Motor neuron (in vitro differentiated cells): ENCODE measurements at regions of chr6 and their contacts with region 1.

Region 1: GRCh38 chr6:110944681-110945151 is 13.8 kb upstream of the GTF3C6 start:
- ATAC-seq: peak in 7 of 8 experiments; percentile 21 to 100 (median 74)
- H3K4me3 ChIP-seq: no peak overlapping the region
- H3K27ac ChIP-seq: no peak overlapping the region
- H3K4me1 ChIP-seq: no peaks in the 10 kb centered on the region

Region 2: DNA sequence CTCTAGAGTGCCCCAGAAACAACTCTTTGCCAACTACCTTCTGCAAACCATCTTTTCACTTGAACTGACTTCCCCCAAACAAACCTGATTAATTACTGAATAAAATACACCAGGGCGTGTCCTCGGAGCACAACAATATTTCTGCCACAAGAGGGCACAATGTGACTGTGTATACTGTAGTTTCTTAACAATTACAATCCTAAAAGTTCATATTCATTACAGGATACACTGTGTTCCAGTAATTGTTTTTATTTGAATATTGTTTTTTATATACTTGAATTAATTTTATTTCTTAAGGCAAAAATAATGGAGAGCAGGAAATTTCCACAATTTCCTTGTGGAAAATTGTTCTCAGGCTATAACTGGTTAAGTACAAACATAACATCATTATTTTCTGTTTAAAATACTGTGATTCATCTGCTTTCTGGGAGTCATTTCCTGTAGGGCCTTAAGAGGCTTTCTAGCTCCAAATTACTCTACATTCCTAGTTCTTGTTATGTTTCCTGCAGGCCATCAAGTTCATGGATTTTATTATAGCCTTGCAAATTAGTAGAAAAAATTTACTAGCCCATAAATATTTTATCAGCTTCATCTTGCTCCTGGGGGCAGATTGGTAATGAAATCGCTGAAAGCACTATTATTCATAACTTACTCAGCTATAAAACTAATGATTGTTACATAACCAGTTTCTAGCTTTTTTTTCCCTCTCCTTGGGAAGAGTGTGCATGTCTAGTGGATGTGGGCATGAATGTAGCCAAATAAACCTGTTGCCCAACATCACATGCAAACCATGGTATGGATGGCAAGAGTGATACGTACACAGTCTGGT is 416.4 kb before region 1 on chr6:
- in situ Hi-C with region 1: loop called in 2 of 9 experiments (anchors 25 kb)
- ATAC-seq: peak; percentile 47 to 89 (median 62)
- H3K4me3 ChIP-seq: no peak overlapping the region
- H3K27ac ChIP-seq: no peak overlapping the region
- H3K4me1 ChIP-seq: peaks cover 0 to 4% of the 10 kb centered on the region in 2 donors

Region 3: DNA sequence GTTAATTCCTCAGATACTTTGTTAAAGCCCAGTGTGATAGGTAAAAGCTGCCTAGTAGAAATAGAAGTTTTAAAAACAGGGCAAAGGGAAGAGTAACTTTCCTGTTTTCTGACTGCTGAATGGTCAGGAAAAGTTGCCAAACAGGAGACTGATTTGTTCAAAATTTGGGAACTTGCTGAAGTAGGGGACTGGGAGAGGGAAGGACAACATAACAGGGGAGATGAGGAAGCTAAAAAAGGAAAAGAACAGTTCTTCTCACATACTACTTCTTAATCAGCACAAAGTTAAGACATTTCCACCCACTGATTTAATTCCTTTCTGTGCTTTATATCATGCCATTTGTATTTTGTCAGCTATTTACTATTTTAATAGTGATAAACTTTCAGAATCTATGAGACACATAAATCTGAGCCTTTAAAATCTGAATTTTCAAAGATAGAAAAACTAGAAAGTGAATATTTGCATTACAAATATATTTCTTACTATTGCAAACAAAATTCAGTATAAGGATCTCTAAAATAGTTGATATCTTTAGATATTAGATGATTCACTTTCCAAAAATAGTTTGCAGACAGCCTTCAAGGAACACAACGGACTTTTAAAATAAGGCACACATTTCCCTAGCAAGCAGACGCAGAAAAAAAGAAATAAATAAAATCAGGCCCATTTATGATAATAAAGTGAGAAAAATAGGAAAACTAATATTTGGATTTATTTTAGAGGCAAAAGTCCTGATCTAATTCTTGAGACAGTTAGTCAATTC is 105.7 kb after region 1 on chr6:
- in situ Hi-C with region 1: no loop called
- ATAC-seq: no peak
- H3K4me3 ChIP-seq: no peak overlapping the region
- H3K27ac ChIP-seq: no peak overlapping the region
- H3K4me1 ChIP-seq: no peaks in the 10 kb centered on the region